ENCODE measurements at regions of chr10 and their contacts with region 1.

Region 1: GRCh38 chr10:101018600-101019439 is 12.1 kb downstream of the PDZD7 start:
- DNase-seq: peak; percentile 88
- ATAC-seq: peak; percentile 87
- H3K4me3 Mint-ChIP-seq: no peak overlapping the region
- H3K27ac Mint-ChIP-seq: no peak overlapping the region
- H3K4me1 Mint-ChIP-seq: peaks cover 23% of the 10 kb centered on the region
- H3K27me3 Mint-ChIP-seq: peaks cover 40% of the 10 kb centered on the region

Region 2: DNA sequence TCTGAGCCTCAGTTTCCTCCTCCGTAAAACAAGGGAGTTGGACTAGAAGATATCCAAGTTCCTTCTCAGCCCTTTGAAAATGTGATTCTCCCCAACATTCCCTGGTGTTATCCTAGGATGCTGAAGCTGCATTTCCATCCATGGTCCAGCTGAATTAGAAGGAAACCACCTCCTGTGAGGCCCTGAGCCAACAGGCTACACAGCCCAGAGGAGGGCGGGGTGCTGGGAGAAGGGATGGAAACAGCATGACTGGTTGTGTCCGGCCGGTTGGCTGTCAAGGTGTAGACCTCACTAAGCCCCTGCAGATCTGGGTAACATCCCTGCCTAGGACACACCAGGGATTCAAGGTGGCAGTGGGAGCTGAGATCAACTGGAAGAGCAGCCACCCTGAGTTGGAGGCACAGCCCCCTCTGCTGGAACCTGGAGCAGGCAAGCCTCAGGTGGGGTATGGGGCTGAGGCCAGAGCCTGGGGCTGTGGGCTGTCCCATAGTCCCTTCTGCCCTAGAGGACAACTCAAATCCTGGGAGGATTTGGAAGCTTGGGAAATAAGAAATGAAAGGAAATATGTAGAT is 201.5 kb before region 1 on chr10:
- CTCF ChIA-PET with region 1: no interaction called
- DNase-seq: no peak
- ATAC-seq: no peak
- H3K4me3 Mint-ChIP-seq: no peak overlapping the region
- H3K27ac Mint-ChIP-seq: no peak overlapping the region
- H3K4me1 Mint-ChIP-seq: no peaks in the 10 kb centered on the region
- H3K27me3 Mint-ChIP-seq: peaks cover 78% of the 10 kb centered on the region

Region 3: GRCh38 chr10:100923580-100923979 is 95.2 kb before region 1 on chr10:
- CTCF ChIA-PET with region 1: no interaction called
- DNase-seq: no peak
- ATAC-seq: no peak
- H3K4me3 Mint-ChIP-seq: no peak overlapping the region
- H3K27ac Mint-ChIP-seq: no peak overlapping the region
- H3K4me1 Mint-ChIP-seq: peaks cover 9% of the 10 kb centered on the region
- H3K27me3 Mint-ChIP-seq: no peaks in the 10 kb centered on the region

Region 4: DNA sequence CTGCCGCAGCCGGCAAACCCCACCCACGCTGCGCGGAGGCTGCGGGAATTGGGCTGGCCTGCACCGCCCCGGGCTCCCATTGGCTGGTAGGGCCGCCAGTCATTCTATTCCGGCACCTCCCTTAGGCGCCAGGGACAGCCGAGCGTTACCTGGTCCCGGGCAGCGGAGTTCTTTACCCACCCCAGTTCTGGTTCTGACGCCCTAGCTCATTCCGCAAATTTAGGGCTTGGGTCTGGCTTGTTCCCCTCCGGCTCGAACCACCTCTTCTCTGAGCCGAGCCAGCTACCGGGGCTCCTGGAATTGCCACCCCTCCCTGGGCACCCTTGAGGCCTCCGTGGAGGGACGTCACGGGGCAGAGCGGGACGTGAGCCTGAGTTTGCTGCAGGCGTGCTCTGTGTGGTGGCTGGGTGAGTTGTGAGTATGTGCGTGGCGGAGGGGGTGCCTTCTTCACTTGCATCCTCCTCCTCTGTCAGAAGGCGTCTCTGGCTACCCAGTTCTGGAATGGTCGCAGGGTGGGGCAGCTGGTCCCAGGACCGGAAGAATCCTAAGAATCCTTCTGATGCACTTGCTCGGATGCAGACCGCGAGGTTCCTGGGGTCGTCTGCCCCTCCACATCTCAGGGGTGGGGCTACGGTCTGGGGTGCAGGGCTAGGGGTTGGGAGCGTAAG is 12.4 kb after region 1 on chr10 and contains the starts of genes PDZD7 and SFXN3:
- CTCF ChIA-PET with region 1: interaction called, 139 read pairs
- DNase-seq: peak; percentile 97
- ATAC-seq: peak; percentile 89
- H3K4me3 Mint-ChIP-seq: peak within 1 kb of the TSS; percentile 85
- H3K27ac Mint-ChIP-seq: peak within 1 kb of the TSS; percentile 91
- H3K4me1 Mint-ChIP-seq: peaks cover 15% of the 10 kb centered on the region
- H3K27me3 Mint-ChIP-seq: peaks cover 18% of the 10 kb centered on the region
- total RNA-seq, gene PDZD7: 0.59 to 1.2 TPM
- total RNA-seq, gene SFXN3: 38.2 to 48.8 TPM

Region 5: GRCh38 chr10:101042667-101043355 is 24.0 kb after region 1 on chr10:
- CTCF ChIA-PET with region 1: interaction called, 91 read pairs
- DNase-seq: peak; percentile 96
- ATAC-seq: peak; percentile 95
- H3K4me3 Mint-ChIP-seq: peak overlapping the region; percentile 95
- H3K27ac Mint-ChIP-seq: peak overlapping the region; percentile 91
- H3K4me1 Mint-ChIP-seq: peaks cover 23% of the 10 kb centered on the region
- H3K27me3 Mint-ChIP-seq: peaks cover 31% of the 10 kb centered on the region

Region 6: GRCh38 chr10:101050208-101051069 is 31.6 kb after region 1 on chr10:
- CTCF ChIA-PET with region 1: interaction called, 33 read pairs
- DNase-seq: peak; percentile 84
- ATAC-seq: peak; percentile 93
- H3K4me3 Mint-ChIP-seq: no peak overlapping the region
- H3K27ac Mint-ChIP-seq: no peak overlapping the region
- H3K4me1 Mint-ChIP-seq: peaks cover 27% of the 10 kb centered on the region
- H3K27me3 Mint-ChIP-seq: peaks cover 54% of the 10 kb centered on the region

Region 7: GRCh38 chr10:101060036-101060950 is 41.5 kb after region 1 on chr10:
- CTCF ChIA-PET with region 1: interaction called, 15 read pairs
- DNase-seq: peak; percentile 93
- ATAC-seq: peak; percentile 71
- H3K4me3 Mint-ChIP-seq: peak overlapping the region; percentile 86
- H3K27ac Mint-ChIP-seq: peak overlapping the region; percentile 90
- H3K4me1 Mint-ChIP-seq: peaks cover 43% of the 10 kb centered on the region
- H3K27me3 Mint-ChIP-seq: peaks cover 31% of the 10 kb centered on the region

Region 8: DNA sequence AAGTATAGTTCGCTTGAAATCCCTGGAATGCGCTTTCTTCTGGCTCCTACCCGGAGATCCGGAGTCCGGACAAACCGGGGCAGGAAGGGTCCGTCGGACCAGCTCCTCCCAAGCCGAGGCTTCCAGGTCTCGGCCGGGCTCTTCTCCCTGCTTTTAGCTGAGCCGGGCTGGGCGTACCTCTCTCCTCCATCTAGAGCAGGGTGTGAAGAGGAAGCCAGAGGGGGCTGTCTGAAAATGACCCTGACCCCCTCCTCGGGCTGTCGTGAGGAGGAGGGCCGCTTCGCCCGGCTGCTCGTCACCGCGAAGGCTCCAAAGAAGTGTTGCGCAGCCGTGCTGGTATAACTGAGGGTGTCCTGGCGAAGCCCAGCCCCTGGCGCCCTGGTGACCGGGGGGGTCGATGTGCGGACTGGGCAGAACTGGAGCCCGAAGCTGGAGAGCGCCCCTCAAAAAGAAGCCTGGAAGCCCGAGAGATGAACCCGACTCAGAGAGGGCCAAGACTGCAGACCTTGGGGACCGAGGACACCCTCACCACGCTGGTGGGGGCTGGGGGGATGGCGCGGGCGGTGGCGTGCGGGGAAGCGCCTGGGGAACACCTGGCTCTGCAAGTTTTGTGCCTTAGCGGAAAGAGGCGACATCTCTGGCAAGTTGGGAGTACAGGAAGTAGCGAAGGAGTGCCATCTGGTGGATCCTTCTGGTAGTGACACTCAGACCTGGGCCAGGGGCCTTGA is 48.7 kb after region 1 on chr10:
- CTCF ChIA-PET with region 1: interaction called, 31 read pairs
- DNase-seq: peak; percentile 85
- ATAC-seq: peak; percentile 64
- H3K4me3 Mint-ChIP-seq: peak overlapping the region; percentile 74
- H3K27ac Mint-ChIP-seq: no peak overlapping the region
- H3K4me1 Mint-ChIP-seq: peaks cover 22% of the 10 kb centered on the region
- H3K27me3 Mint-ChIP-seq: peaks cover 59% of the 10 kb centered on the region

Region 9: GRCh38 chr10:101075775-101076174 is 57.0 kb after region 1 on chr10:
- CTCF ChIA-PET with region 1: interaction called, 14 read pairs
- DNase-seq: no peak
- ATAC-seq: peak; percentile 55
- H3K4me3 Mint-ChIP-seq: no peak overlapping the region
- H3K27ac Mint-ChIP-seq: no peak overlapping the region
- H3K4me1 Mint-ChIP-seq: no peaks in the 10 kb centered on the region
- H3K27me3 Mint-ChIP-seq: peaks cover 59% of the 10 kb centered on the region

Region 10: GRCh38 chr10:101085846-101086245 is 67.0 kb after region 1 on chr10:
- CTCF ChIA-PET with region 1: no interaction called
- DNase-seq: no peak
- ATAC-seq: no peak
- H3K4me3 Mint-ChIP-seq: no peak overlapping the region
- H3K27ac Mint-ChIP-seq: no peak overlapping the region
- H3K4me1 Mint-ChIP-seq: no peaks in the 10 kb centered on the region
- H3K27me3 Mint-ChIP-seq: peaks cover 71% of the 10 kb centered on the region

Region 11: DNA sequence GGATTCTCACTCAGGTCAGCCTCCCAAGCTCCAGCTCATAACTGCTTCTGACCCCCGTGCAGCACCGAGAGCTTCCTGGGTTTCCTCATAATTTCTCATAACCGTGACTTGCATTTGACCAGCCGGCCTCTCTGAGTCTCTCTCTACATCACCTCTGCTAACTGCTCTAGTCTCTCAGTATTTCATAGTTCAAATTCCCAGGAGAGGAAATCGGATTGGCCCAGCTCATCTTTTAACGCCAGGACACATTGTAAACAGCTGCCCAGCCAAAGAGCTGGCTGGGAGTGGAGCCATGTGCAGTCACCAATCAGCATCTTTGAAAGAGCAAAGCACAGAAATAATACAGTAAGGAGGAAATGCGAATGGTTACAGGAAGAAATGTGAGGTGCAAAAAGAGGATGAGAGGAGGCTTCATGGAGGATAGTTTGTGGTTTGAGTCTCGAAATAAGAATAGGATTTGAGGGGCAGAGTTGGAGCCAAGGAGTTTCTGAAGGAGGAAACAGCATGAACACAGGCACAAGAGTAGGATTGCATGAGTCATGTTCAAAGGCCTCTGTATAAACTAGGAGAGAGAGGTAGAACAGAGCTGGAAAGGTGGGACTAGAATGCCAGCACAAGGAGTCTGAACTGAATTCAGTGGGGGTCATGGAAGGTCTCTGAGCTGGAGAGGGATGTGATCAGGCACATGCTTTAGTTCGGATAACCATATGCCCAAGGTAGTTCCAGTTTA is 225.7 kb after region 1 on chr10:
- CTCF ChIA-PET with region 1: no interaction called
- DNase-seq: no peak
- ATAC-seq: no peak
- H3K4me3 Mint-ChIP-seq: no peak overlapping the region
- H3K27ac Mint-ChIP-seq: no peak overlapping the region
- H3K4me1 Mint-ChIP-seq: no peaks in the 10 kb centered on the region
- H3K27me3 Mint-ChIP-seq: peaks cover 43% of the 10 kb centered on the region

Measured in activated CD8-positive, alpha-beta memory T cell treated with anti-CD3 and anti-CD28 coated beads, Interleukin-2, amount 10 ng/mL, durations not matched to agents 7 days and 5 days (primary cell).